K562 (cell line): ENCODE measurements at regions of chr22 and their contacts with region 1.

Region 1: GRCh38 chr22:22687638-22688500 is 43.5 kb downstream of the GGTLC2 start:
- DNase-seq: peak; percentile 90 to 93 (median 91)
- ATAC-seq: peak; percentile 92
- H3K4me3 ChIP-seq: no peak overlapping the region
- H3K27ac ChIP-seq: no peak overlapping the region
- H3K4me1 ChIP-seq: no peaks in the 10 kb centered on the region
- H3K27me3 ChIP-seq: peaks cover 0 to 18% of the 10 kb centered on the region in 2 experiments; a peak in 2 of 5 replicates
- CTCF ChIP-seq: no peak
- EP300 ChIP-seq: no peak
- POLR2A ChIP-seq: no peak
- RAD21 ChIP-seq: no peak

Region 2: GRCh38 chr22:22576244-22576988 is 111.5 kb before region 1 on chr22:
- CTCF ChIA-PET with region 1: interaction called, 12 read pairs
- POLR2A ChIA-PET with region 1: no interaction called
- in situ Hi-C with region 1: no loop called
- intact Hi-C with region 1: no loop called
- DNase-seq: peak; percentile 96 to 98 (median 97)
- ATAC-seq: peak; percentile 96
- H3K4me3 ChIP-seq: no peak overlapping the region
- H3K27ac ChIP-seq: no peak overlapping the region
- H3K4me1 ChIP-seq: peaks cover 0 to 14% of the 10 kb centered on the region in 2 experiments; a peak in 3 of 5 replicates
- H3K27me3 ChIP-seq: peaks cover 48 to 60% of the 10 kb centered on the region in 2 experiments
- CTCF ChIP-seq: peak in 1 of 3 experiments; percentile 99; a peak in 2 of 6 replicates
- EP300 ChIP-seq: peak; percentile 75
- POLR2A ChIP-seq: no peak
- RAD21 ChIP-seq: peak in 1 of 2 experiments; percentile 89; a peak in 2 of 4 replicates

Region 3: GRCh38 chr22:22666307-22667091 is 21.4 kb before region 1 on chr22:
- CTCF ChIA-PET with region 1: interaction called, 37 read pairs
- POLR2A ChIA-PET with region 1: interaction called, 23 read pairs
- in situ Hi-C with region 1: no loop called
- intact Hi-C with region 1: no loop called
- DNase-seq: peak; percentile 82 to 90 (median 84)
- ATAC-seq: peak; percentile 93
- H3K4me3 ChIP-seq: no peak overlapping the region
- H3K27ac ChIP-seq: no peak overlapping the region
- H3K4me1 ChIP-seq: no peaks in the 10 kb centered on the region
- H3K27me3 ChIP-seq: peaks cover 2 to 35% of the 10 kb centered on the region in 2 experiments; a peak in 4 of 5 replicates
- CTCF ChIP-seq: no peak
- EP300 ChIP-seq: no peak
- POLR2A ChIP-seq: no peak
- RAD21 ChIP-seq: no peak

Region 4: GRCh38 chr22:22702237-22703202 is 14.7 kb after region 1 on chr22:
- CTCF ChIA-PET with region 1: no interaction called
- POLR2A ChIA-PET with region 1: interaction called, 122 read pairs
- in situ Hi-C with region 1: no loop called
- intact Hi-C with region 1: loop called (anchors 2 kb)
- DNase-seq: peak in 1 of 4 experiments; percentile 83
- ATAC-seq: peak; percentile 86
- H3K4me3 ChIP-seq: no peak overlapping the region
- H3K27ac ChIP-seq: no peak overlapping the region
- H3K4me1 ChIP-seq: no peaks in the 10 kb centered on the region
- H3K27me3 ChIP-seq: peaks cover 0 to 36% of the 10 kb centered on the region in 2 experiments; a peak in 2 of 5 replicates
- CTCF ChIP-seq: peak in 1 of 3 experiments; percentile 93; a peak in 2 of 6 replicates
- EP300 ChIP-seq: no peak
- POLR2A ChIP-seq: no peak
- RAD21 ChIP-seq: peak in 1 of 2 experiments; percentile 91; a peak in 2 of 4 replicates

Region 5: GRCh38 chr22:23023294-23023693 is 335.4 kb after region 1 on chr22:
- CTCF ChIA-PET with region 1: no interaction called
- POLR2A ChIA-PET with region 1: no interaction called
- in situ Hi-C with region 1: no loop called
- intact Hi-C with region 1: no loop called
- DNase-seq: no peak
- ATAC-seq: no peak
- H3K4me3 ChIP-seq: no peak overlapping the region
- H3K27ac ChIP-seq: no peak overlapping the region
- H3K4me1 ChIP-seq: peaks cover 0 to 4% of the 10 kb centered on the region in 2 experiments; a peak in 2 of 5 replicates
- H3K27me3 ChIP-seq: peaks cover 16 to 26% of the 10 kb centered on the region in 2 experiments
- CTCF ChIP-seq: no peak
- EP300 ChIP-seq: no peak
- POLR2A ChIP-seq: no peak
- RAD21 ChIP-seq: no peak